Esophagus muscularis mucosa (tissue), 4 donors: ENCODE measurements at regions of chr5 and their contacts with region 1.

Region 1: DNA sequence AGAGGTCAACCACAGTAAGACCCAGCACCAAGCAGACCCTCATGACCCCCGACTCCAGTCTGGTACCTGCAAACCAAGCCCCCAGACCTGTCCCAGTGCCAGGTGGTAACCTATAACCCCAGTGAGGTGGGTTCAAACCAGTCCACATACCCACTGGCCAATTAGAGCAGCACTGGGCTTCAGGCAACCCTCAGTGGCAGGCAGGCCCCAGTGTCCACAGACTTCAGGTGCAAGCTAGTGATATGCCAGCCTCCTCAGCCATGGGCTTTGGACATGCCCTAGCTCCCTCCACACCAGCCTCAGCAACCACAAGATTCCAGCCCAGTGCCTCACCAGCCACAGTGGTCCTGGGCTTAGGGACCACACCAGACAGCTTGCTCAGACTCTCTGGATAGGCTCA is 276.6 kb downstream of the DTWD2 start:
- DNase-seq: no peak
- H3K4me3 ChIP-seq: no peak overlapping the region
- H3K27ac ChIP-seq: no peak overlapping the region
- H3K4me1 ChIP-seq: no peaks in the 10 kb centered on the region
- H3K27me3 ChIP-seq: no peaks in the 10 kb centered on the region
- CTCF ChIP-seq: no peak
- EP300 ChIP-seq: no peak
- POLR2A ChIP-seq: no peak

Region 2: DNA sequence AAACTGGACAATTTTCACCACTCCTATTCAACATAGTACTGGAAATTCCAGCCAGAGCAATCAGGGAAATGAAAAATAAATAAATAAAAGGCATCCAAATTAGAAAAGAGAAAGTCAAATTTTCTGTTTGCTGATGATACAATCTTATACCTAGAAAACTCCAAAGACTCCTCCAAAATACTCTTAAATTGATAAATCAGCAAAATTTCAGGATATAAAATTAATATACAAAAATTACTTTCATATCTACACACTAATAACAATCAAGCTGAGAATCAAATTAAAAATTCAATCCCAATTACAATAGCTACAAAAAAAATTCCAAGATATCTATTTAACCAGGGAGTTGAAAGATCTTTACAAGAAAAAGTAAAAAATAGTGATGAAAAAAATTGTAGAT is 375.3 kb before region 1 on chr5:
- intact Hi-C with region 1: loop called (anchors 5 kb)
- DNase-seq: no peak
- H3K4me3 ChIP-seq: no peak overlapping the region
- H3K27ac ChIP-seq: no peak overlapping the region
- H3K4me1 ChIP-seq: no peaks in the 10 kb centered on the region
- H3K27me3 ChIP-seq: no peaks in the 10 kb centered on the region
- CTCF ChIP-seq: no peak
- EP300 ChIP-seq: no peak
- POLR2A ChIP-seq: no peak

Region 3: DNA sequence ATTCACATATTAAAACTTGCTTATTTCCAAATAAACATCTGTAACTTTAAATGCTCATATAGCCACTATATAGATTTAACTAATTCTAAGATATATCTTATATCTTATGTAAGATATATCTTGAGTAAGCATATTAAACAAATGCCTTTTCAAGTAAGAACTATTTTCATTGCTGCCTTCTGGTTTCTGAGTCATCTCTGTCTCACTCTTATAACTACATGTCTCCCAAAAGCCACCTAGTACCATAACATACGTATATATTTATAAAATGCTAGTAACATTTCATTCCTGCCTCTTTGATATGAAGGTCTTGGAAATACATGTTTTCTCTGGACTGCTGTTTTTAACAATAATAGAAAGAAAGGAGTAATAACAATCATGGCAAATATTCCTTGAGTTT is 152.9 kb before region 1 on chr5:
- intact Hi-C with region 1: no loop called
- DNase-seq: no peak
- H3K4me3 ChIP-seq: no peak overlapping the region
- H3K27ac ChIP-seq: no peak overlapping the region
- H3K4me1 ChIP-seq: peaks cover 0 to 7% (median 0%) of the 10 kb centered on the region in 4 donors
- H3K27me3 ChIP-seq: no peaks in the 10 kb centered on the region
- CTCF ChIP-seq: no peak
- EP300 ChIP-seq: no peak
- POLR2A ChIP-seq: no peak

Region 4: DNA sequence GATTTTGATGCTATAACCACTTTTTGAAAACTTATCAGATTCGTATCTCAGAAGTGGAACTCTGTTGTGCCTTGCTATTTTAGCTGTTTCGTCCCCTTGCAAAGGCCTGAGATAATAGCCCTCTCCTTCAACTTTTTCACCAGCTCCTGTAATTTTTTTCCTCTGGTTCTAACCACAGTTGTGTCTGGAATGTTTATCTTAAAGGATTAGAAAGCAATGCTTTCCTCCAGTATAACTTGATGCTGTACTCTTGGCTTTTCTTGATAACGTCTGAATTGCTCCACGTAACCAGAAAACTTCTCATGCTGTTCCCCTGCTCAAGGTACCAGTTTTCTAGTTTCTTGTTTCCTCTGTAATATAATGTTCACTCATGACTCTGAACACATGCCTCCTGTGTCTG is 67.2 kb after region 1 on chr5:
- intact Hi-C with region 1: no loop called
- DNase-seq: no peak
- H3K4me3 ChIP-seq: no peak overlapping the region
- H3K27ac ChIP-seq: no peak overlapping the region
- H3K4me1 ChIP-seq: no peaks in the 10 kb centered on the region
- H3K27me3 ChIP-seq: no peaks in the 10 kb centered on the region
- CTCF ChIP-seq: no peak
- EP300 ChIP-seq: no peak
- POLR2A ChIP-seq: no peak